ENCODE measurements at regions of chr17 and their contacts with region 1.

Region 1: DNA sequence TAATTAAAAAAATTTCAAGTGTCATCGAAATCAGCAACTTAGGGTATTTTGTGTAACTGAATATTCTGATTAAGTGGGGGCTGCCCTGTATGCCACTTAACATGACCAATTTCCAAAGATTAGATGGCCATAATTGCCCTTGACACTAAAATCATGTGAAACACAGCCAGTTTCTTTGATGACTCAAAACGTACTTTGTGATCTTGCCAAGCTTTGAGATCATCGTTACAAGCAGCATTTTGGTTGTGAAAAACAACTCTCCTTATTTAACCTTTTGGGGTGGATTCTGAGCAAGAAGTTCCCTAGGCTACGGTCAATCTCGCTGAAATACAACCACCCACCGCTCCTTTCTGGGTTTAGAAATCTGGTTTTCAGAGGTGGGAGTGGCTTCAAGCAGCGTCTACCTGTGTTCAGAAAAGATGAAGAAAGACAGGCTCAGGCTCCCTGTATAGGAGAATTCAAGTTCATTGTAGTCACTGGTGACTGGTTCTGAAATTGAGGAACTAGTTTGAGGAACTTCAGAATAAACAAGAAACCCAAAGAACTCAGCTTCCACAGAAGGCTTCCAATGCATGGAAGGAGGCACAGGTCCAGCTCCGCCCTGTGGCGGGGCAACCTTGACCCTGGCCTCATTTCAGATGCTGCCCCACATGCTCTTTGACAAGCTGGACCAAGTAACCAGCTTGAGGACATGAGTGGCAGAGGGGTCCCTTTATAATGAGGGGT is 9.4 kb downstream of the MAP3K14 start:
- DNase-seq: peak; percentile 51
- H3K4me3 Mint-ChIP-seq: no peak overlapping the region
- H3K27ac Mint-ChIP-seq: peak overlapping the region; percentile 75
- H3K4me1 Mint-ChIP-seq: peaks cover 86% of the 10 kb centered on the region
- H3K27me3 Mint-ChIP-seq: no peaks in the 10 kb centered on the region

Region 2: GRCh38 chr17:45197555-45198334 is 109.7 kb before region 1 on chr17:
- CTCF ChIA-PET with region 1: no interaction called
- POLR2A ChIA-PET with region 1: no interaction called
- DNase-seq: peak; percentile 86
- H3K4me3 Mint-ChIP-seq: no peak overlapping the region
- H3K27ac Mint-ChIP-seq: no peak overlapping the region
- H3K4me1 Mint-ChIP-seq: peaks cover 7% of the 10 kb centered on the region
- H3K27me3 Mint-ChIP-seq: no peaks in the 10 kb centered on the region

Region 3: DNA sequence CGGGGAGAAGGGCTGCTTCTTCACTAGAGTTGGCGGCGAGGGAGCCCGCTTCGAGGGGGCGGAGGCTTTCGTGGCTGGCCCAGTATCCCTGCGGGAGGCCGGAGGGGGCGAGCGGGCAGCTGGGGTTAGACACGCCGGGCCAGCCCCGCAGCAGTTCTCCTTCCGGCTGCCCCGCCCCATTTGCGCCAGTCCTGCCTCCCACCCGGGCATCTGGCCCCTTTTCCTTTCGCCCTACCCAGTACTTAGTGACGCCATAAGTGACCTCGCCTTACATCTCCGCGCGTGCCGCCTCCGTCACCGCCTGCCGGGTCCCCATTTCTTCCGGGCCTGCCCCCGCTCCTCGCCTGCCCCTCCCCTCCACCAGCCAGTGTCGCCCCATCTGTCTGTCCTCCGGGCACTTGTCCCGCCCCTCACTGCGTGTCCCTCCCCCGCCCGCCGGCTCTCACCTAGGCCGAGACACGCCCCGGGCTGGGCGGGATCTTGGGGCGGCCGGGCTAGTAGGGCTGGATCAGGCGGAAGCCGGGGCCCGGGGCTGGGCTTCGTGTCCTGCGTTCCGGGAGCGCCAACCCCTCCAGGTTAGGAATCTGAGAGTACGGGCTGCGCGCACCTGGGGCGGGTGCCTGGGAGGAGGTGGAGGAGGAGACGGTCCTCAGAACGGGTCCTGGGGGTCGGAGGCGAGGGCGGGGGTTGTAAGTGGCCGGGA is 59.9 kb before region 1 on chr17:
- CTCF ChIA-PET with region 1: interaction called, 6 read pairs
- POLR2A ChIA-PET with region 1: interaction called, 16 read pairs
- DNase-seq: peak; percentile 99
- H3K4me3 Mint-ChIP-seq: peak overlapping the region; percentile 87
- H3K27ac Mint-ChIP-seq: peak overlapping the region; percentile 84
- H3K4me1 Mint-ChIP-seq: peaks cover 62% of the 10 kb centered on the region
- H3K27me3 Mint-ChIP-seq: no peaks in the 10 kb centered on the region

Region 4: GRCh38 chr17:45284176-45285140 is 23.0 kb before region 1 on chr17:
- CTCF ChIA-PET with region 1: interaction called, 3 read pairs
- POLR2A ChIA-PET with region 1: interaction called, 16 read pairs
- DNase-seq: peak; percentile 50
- H3K4me3 Mint-ChIP-seq: no peak overlapping the region
- H3K27ac Mint-ChIP-seq: peak overlapping the region; percentile 68
- H3K4me1 Mint-ChIP-seq: peaks cover 10% of the 10 kb centered on the region
- H3K27me3 Mint-ChIP-seq: no peaks in the 10 kb centered on the region

Region 5: DNA sequence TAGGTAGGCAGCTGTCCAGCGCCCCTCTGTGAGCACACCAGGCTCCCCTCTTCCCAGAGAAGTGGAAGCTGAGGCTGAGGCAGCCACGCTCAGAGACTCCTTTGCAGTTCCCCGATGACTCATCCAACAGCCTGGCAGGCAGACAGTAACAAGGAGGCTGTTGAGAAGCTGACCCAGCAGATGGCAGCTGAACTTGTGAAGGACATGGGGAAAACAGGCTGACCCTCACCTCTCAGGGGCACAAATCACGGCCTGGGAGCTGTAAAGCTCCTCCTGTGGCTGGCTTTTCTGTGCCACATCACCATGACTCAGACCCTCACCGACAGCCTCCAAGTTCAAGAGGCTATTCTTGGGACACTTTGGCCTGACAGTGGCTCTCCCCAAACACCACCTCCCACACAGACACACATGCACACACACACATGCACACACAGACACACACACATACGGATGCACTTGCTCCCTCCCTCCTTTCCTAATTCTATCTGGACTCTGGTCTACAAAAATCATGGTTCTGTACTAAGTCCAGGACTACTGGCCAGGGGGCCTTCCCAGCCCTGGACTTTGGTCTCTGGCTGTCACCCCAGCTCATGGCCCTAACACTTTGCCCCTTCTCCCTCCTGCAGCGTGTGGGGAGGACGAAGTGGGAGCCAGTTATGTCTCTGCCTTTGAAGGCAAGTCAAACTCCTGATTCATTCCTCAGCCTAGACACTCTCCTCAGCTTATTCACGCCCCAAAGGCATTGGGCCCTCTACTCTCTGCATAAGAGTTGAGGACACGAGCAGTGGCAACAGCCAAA is 13.8 kb before region 1 on chr17:
- CTCF ChIA-PET with region 1: interaction called, 28 read pairs
- POLR2A ChIA-PET with region 1: interaction called, 28 read pairs
- DNase-seq: no peak
- H3K4me3 Mint-ChIP-seq: no peak overlapping the region
- H3K27ac Mint-ChIP-seq: peak overlapping the region; percentile 63
- H3K4me1 Mint-ChIP-seq: peaks cover 76% of the 10 kb centered on the region
- H3K27me3 Mint-ChIP-seq: no peaks in the 10 kb centered on the region

Measured in activated CD4-positive, alpha-beta memory T cell treated with anti-CD3 and anti-CD28 coated beads, Interleukin-2, amount 10 ng/mL, durations not matched to agents 7 days and 5 days (primary cell).